Posterior cingulate gyrus (tissue), 11 donors: ENCODE measurements at regions of chr19 and their contacts with region 1.

Region 1: GRCh38 chr19:48795055-48795684 is 15.7 kb downstream of the BCAT2 start:
- DNase-seq: peak; percentile 88 to 99 (median 94)

Region 2: DNA sequence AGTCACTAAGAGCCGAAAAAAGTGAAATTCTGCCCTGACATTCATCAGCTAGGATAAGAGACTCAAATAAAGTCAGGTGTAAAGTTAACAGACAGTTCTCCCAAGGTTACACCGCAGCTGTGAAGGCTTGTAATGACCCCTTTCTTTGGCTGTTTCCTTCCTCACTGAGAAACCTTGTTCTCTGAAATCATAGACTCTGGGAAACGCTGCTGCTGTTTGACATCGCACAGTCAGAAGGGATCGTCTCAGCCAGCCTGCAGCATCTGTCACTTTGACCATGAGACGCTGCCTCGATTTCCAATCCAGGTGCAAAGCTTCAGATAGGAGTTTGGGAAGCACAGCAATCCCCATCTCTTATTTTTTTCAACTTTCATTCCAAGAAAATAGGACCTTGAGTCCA is 15.0 kb after region 1 on chr19:
- intact Hi-C with region 1: loop called (anchors 2 kb)
- DNase-seq: no peak

Region 3: DNA sequence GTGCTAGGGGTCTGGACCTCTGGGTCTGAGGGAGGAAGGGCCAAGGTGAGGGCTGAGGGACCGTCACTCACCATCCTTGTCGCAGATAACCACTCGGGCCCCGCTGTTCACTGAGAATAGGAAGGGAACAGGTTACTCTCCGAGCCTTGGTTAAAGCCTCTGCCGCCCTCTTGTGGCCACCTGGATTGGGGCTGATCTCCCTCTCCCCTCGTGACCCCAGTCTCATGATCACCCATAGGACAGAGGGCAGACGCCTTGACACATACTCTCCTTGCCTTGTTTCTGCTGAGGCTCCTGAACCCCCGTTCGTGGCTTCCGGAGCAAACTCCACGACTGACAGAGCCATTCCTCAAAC is 40.5 kb after region 1 on chr19:
- intact Hi-C with region 1: loop called (anchors 1 kb)
- DNase-seq: peak; percentile 77 to 98 (median 93)